Activated B cell treated with CpG ODN at 0.5 μM for 24 hours (primary cell): ENCODE measurements at regions of chr16 and their contacts with region 1.

Region 1: GRCh38 chr16:2867987-2868789 is 10.2 kb upstream of the PRSS22 start:
- DNase-seq: peak; percentile 92
- ATAC-seq: peak; percentile 96
- H3K4me3 Mint-ChIP-seq: peak overlapping the region; percentile 93
- H3K27ac Mint-ChIP-seq: peak overlapping the region; percentile 92
- H3K4me1 Mint-ChIP-seq: peaks cover 7% of the 10 kb centered on the region
- H3K27me3 Mint-ChIP-seq: peaks cover 11% of the 10 kb centered on the region
- CTCF ChIP-seq: peak; percentile 31

Region 2: GRCh38 chr16:2673066-2673999 is 194.9 kb before region 1 on chr16:
- CTCF ChIA-PET with region 1: interaction called, 5 read pairs
- POLR2A ChIA-PET with region 1: interaction called, 7 read pairs
- intact Hi-C with region 1: loop called (anchors 2 kb)
- DNase-seq: peak; percentile 91
- ATAC-seq: peak; percentile 94
- H3K4me3 Mint-ChIP-seq: peak overlapping the region; percentile 85
- H3K27ac Mint-ChIP-seq: peak overlapping the region; percentile 71
- H3K4me1 Mint-ChIP-seq: peaks cover 29% of the 10 kb centered on the region
- H3K27me3 Mint-ChIP-seq: no peaks in the 10 kb centered on the region
- CTCF ChIP-seq: no peak

Region 3: GRCh38 chr16:2777231-2777902 is 90.8 kb before region 1 on chr16 and contains the start of gene ELOB:
- CTCF ChIA-PET with region 1: no interaction called
- POLR2A ChIA-PET with region 1: interaction called, 20 read pairs
- intact Hi-C with region 1: loop called (anchors 5 kb)
- DNase-seq: peak; percentile 92
- ATAC-seq: peak; percentile 94
- H3K4me3 Mint-ChIP-seq: peak within 1 kb of the TSS; percentile 94
- H3K27ac Mint-ChIP-seq: peak within 1 kb of the TSS; percentile 95
- H3K4me1 Mint-ChIP-seq: peaks cover 28% of the 10 kb centered on the region
- H3K27me3 Mint-ChIP-seq: no peaks in the 10 kb centered on the region
- CTCF ChIP-seq: no peak
- total RNA-seq, gene ELOB: 172 and 190 TPM in 2 replicates

Region 4: DNA sequence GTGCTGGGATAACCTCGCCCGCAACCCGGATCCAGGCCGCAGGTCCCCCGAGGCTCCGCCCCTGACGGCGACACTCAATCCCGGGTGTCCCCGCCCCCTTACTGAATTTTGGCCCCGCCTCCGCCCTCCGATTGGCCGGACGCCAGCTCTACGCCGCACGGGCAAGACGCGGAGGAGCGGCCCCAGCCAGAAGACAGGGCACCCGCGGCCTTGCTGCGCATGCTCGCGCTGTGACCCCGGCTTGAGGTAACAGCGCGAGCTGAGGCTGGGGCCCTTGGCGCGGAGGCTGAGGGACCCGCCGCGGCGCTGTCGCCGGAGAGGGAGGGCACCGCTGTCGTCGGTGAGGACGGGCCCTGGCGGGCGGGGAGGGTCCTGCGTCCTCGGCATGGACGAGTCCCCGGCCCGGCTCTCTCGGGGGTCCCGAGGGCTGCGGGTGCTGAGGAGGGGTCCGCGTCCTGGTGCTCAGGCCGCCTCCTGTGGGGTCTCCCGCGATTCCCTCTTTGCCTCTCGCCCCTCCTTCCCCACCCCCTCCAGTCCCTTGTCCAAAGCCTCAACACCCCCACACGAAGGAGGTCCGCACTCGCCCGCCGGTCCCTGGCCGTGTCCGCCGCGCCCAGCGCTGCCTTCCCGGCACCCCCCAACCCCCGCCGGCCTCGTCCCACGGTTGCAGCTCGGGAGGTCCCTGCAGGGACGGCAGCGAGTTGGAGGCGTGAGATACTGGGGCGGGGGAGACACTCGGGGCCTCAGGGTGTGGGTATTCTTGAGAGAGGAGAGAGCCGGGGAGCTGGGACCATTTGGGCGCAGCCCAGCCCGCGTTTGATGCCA is 15.1 kb after region 1 on chr16 and contains the start of gene FLYWCH2:
- CTCF ChIA-PET with region 1: interaction called, 11 read pairs
- POLR2A ChIA-PET with region 1: interaction called, 21 read pairs
- intact Hi-C with region 1: loop called (anchors 1 kb)
- DNase-seq: peak; percentile 100
- ATAC-seq: peak; percentile 80
- H3K4me3 Mint-ChIP-seq: peak within 1 kb of the TSS; percentile 92
- H3K27ac Mint-ChIP-seq: peak within 1 kb of the TSS; percentile 98
- H3K4me1 Mint-ChIP-seq: peaks cover 18% of the 10 kb centered on the region
- H3K27me3 Mint-ChIP-seq: no peaks in the 10 kb centered on the region
- CTCF ChIP-seq: no peak
- total RNA-seq, gene FLYWCH2: 19.4 and 20.3 TPM in 2 replicates

Region 5: GRCh38 chr16:2911580-2912329 is 43.6 kb after region 1 on chr16 and contains the start of gene FLYWCH1:
- CTCF ChIA-PET with region 1: interaction called, 15 read pairs
- POLR2A ChIA-PET with region 1: interaction called, 30 read pairs
- intact Hi-C with region 1: no loop called
- DNase-seq: peak; percentile 96
- ATAC-seq: peak; percentile 97
- H3K4me3 Mint-ChIP-seq: peak within 1 kb of the TSS; percentile 93
- H3K27ac Mint-ChIP-seq: peak within 1 kb of the TSS; percentile 82
- H3K4me1 Mint-ChIP-seq: peaks cover 27% of the 10 kb centered on the region
- H3K27me3 Mint-ChIP-seq: no peaks in the 10 kb centered on the region
- CTCF ChIP-seq: no peak
- total RNA-seq, gene FLYWCH1: 53.5 and 59.9 TPM in 2 replicates

Region 6: GRCh38 chr16:2979669-2980226 is 111.6 kb after region 1 on chr16:
- CTCF ChIA-PET with region 1: no interaction called
- POLR2A ChIA-PET with region 1: no interaction called
- intact Hi-C with region 1: no loop called
- DNase-seq: no peak
- ATAC-seq: no peak
- H3K4me3 Mint-ChIP-seq: peak overlapping the region; percentile 67
- H3K27ac Mint-ChIP-seq: no peak overlapping the region
- H3K4me1 Mint-ChIP-seq: peaks cover 27% of the 10 kb centered on the region
- H3K27me3 Mint-ChIP-seq: no peaks in the 10 kb centered on the region
- CTCF ChIP-seq: no peak

Region 7: GRCh38 chr16:3182608-3183444 is 314.6 kb after region 1 on chr16:
- CTCF ChIA-PET with region 1: no interaction called
- POLR2A ChIA-PET with region 1: no interaction called
- intact Hi-C with region 1: no loop called
- DNase-seq: no peak
- ATAC-seq: peak; percentile 40
- H3K4me3 Mint-ChIP-seq: peak overlapping the region; percentile 62
- H3K27ac Mint-ChIP-seq: peak overlapping the region; percentile 63
- H3K4me1 Mint-ChIP-seq: peaks cover 21% of the 10 kb centered on the region
- H3K27me3 Mint-ChIP-seq: peaks cover 71% of the 10 kb centered on the region
- CTCF ChIP-seq: no peak